Esophagus muscularis mucosa (tissue), 4 donors: ENCODE measurements at regions of chr2 and their contacts with region 1.

Region 1: DNA sequence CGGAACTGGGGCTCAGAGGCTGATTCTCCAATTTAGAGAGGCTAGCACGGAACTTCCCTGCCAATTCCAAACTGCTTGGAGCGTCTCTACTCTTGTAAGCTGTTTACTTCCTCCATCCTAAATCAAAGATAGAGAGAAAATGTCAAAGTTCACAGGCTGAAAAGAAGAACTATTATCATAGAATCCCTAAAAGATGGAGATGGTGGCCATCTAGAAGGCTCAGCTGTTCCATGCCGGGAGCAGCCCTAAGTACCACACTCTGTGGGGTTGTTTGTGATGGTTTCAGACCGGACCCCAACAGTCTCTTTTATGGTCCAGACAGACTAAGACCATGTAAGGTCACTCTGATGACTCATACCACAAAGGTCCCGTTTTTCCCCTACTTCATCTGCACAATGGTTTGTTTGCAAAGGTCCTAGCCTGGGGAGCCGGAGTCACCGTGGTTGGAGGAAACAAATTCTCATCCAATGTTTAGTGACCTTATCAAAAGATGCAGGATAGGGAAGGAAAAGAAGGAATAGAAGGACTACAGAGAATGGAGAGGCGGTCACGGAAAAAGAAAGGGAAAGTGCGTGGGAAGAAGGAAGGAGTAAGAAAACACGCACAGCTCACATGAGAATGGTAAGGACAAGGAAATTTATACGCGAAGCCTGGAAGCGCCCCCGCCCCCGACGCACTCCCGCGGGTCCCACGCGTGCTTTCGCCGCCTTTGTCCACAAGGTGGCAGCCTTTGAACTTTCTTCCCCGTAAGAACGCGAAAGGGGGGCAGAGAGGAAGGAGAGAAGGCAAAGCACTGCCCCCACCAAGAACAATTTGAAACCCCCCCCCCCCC is 453 bp upstream of the ANTXR1 start:
- DNase-seq: no peak
- H3K4me3 ChIP-seq: peak overlapping the region; percentile 80 to 94 (median 90)
- H3K27ac ChIP-seq: peak overlapping the region; percentile 91 to 93 (median 92)
- H3K4me1 ChIP-seq: peaks cover 18 to 50% (median 47%) of the 10 kb centered on the region in 4 donors
- H3K27me3 ChIP-seq: no peaks in the 10 kb centered on the region
- CTCF ChIP-seq: peak; percentile 83 to 90 (median 86)
- EP300 ChIP-seq: no peak
- POLR2A ChIP-seq: no peak

Region 2: GRCh38 chr2:68943581-68944568 is 68.7 kb before region 1 on chr2:
- intact Hi-C with region 1: loop called (anchors 5 kb)
- DNase-seq: no peak
- H3K4me3 ChIP-seq: no peak overlapping the region
- H3K27ac ChIP-seq: no peak overlapping the region
- H3K4me1 ChIP-seq: peaks cover 6 to 10% (median 10%) of the 10 kb centered on the region in 4 donors
- H3K27me3 ChIP-seq: no peaks in the 10 kb centered on the region
- CTCF ChIP-seq: peak; percentile 74 to 90 (median 81)
- EP300 ChIP-seq: no peak
- POLR2A ChIP-seq: no peak

Region 3: GRCh38 chr2:69436938-69437750 is 424.6 kb after region 1 on chr2 and contains the start of gene NFU1:
- intact Hi-C with region 1: loop called (anchors 5 kb)
- DNase-seq: peak; percentile 98
- H3K4me3 ChIP-seq: peak within 1 kb of the TSS; percentile 74 to 98 (median 83)
- H3K27ac ChIP-seq: peak within 1 kb of the TSS; percentile 90 to 97 (median 96)
- H3K4me1 ChIP-seq: peaks cover 16 to 52% (median 36%) of the 10 kb centered on the region in 4 donors
- H3K27me3 ChIP-seq: no peaks in the 10 kb centered on the region
- CTCF ChIP-seq: peak; percentile 74 to 76 (median 74)
- EP300 ChIP-seq: no peak
- POLR2A ChIP-seq: peak; percentile 55
- total RNA-seq, gene NFU1: 45.4 to 74.8 (median 48.8) TPM